Activated naive CD4-positive, alpha-beta T cell treated with anti-CD3 and anti-CD28 coated beads for 36 hours (primary cell): ENCODE measurements at regions of chr22 and their contacts with region 1.

Region 1: GRCh38 chr22:24555157-24556039 is at the start of gene SNRPD3:
- DNase-seq: peak; percentile 100
- H3K4me3 Mint-ChIP-seq: peak within 1 kb of the TSS; percentile 97
- H3K27ac Mint-ChIP-seq: peak within 1 kb of the TSS; percentile 100
- H3K4me1 Mint-ChIP-seq: peaks cover 48% of the 10 kb centered on the region
- H3K27me3 Mint-ChIP-seq: no peaks in the 10 kb centered on the region
- total RNA-seq, gene SNRPD3: 158 to 166 TPM

Region 2: GRCh38 chr22:23786752-23787599 is 768.4 kb before region 1 on chr22 and contains the start of gene SMARCB1:
- CTCF ChIA-PET with region 1: no interaction called
- intact Hi-C with region 1: loop called (anchors 2 kb)
- DNase-seq: peak; percentile 89
- H3K4me3 Mint-ChIP-seq: peak within 1 kb of the TSS; percentile 89
- H3K27ac Mint-ChIP-seq: peak within 1 kb of the TSS; percentile 95
- H3K4me1 Mint-ChIP-seq: peaks cover 34% of the 10 kb centered on the region
- H3K27me3 Mint-ChIP-seq: no peaks in the 10 kb centered on the region
- total RNA-seq, gene SMARCB1: 75.3 to 89.1 TPM

Region 3: DNA sequence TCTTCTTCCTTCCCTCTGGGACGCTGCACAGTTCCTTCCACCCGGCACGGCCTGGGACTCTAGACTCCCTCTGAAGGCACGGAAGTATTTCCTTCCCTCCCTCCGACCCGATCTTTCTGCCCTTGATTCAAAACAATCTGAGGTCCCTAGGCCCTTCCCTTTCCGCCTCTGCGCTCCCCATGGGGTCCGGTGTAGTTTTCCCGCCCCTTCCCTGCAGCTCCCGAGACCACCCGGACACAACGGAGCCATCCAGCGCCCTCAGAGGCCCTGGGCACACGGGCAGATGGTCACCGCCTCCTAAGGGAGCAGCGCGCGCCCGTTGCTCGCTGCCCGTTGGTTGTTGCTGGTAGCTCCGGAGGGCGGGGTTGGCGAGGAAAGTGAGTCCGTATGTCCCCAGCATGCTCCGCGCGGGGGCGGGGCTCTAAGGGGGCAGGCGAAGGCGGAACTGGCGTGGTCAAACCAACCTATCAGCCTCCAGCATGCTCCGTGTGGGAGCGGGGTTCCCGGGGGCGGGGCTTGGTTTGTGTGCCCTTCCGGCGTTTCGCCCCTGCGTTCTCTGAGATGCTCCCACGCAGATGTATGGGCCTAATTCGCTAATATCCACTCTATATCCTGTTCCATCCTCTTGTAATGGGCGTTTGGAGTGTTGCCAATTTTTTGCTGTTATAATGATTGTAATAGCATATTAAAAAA is 641.6 kb before region 1 on chr22:
- CTCF ChIA-PET with region 1: no interaction called
- intact Hi-C with region 1: loop called (anchors 1 kb)
- DNase-seq: peak; percentile 100
- H3K4me3 Mint-ChIP-seq: peak overlapping the region; percentile 99
- H3K27ac Mint-ChIP-seq: peak overlapping the region; percentile 99
- H3K4me1 Mint-ChIP-seq: peaks cover 24% of the 10 kb centered on the region
- H3K27me3 Mint-ChIP-seq: no peaks in the 10 kb centered on the region

Region 4: GRCh38 chr22:24270638-24271408 is 284.6 kb before region 1 on chr22 and contains the start of gene SPECC1L:
- CTCF ChIA-PET with region 1: no interaction called
- intact Hi-C with region 1: loop called (anchors 1 kb)
- DNase-seq: peak; percentile 91
- H3K4me3 Mint-ChIP-seq: peak within 1 kb of the TSS; percentile 89
- H3K27ac Mint-ChIP-seq: peak within 1 kb of the TSS; percentile 87
- H3K4me1 Mint-ChIP-seq: peaks cover 36% of the 10 kb centered on the region
- H3K27me3 Mint-ChIP-seq: no peaks in the 10 kb centered on the region
- total RNA-seq, gene SPECC1L: 33.5 to 35.7 TPM

Region 5: GRCh38 chr22:24601217-24602104 is 46.1 kb after region 1 on chr22:
- CTCF ChIA-PET with region 1: no interaction called
- intact Hi-C with region 1: loop called (anchors 5 kb)
- DNase-seq: no peak
- H3K4me3 Mint-ChIP-seq: no peak overlapping the region
- H3K27ac Mint-ChIP-seq: no peak overlapping the region
- H3K4me1 Mint-ChIP-seq: peaks cover 17% of the 10 kb centered on the region
- H3K27me3 Mint-ChIP-seq: no peaks in the 10 kb centered on the region

Region 6: DNA sequence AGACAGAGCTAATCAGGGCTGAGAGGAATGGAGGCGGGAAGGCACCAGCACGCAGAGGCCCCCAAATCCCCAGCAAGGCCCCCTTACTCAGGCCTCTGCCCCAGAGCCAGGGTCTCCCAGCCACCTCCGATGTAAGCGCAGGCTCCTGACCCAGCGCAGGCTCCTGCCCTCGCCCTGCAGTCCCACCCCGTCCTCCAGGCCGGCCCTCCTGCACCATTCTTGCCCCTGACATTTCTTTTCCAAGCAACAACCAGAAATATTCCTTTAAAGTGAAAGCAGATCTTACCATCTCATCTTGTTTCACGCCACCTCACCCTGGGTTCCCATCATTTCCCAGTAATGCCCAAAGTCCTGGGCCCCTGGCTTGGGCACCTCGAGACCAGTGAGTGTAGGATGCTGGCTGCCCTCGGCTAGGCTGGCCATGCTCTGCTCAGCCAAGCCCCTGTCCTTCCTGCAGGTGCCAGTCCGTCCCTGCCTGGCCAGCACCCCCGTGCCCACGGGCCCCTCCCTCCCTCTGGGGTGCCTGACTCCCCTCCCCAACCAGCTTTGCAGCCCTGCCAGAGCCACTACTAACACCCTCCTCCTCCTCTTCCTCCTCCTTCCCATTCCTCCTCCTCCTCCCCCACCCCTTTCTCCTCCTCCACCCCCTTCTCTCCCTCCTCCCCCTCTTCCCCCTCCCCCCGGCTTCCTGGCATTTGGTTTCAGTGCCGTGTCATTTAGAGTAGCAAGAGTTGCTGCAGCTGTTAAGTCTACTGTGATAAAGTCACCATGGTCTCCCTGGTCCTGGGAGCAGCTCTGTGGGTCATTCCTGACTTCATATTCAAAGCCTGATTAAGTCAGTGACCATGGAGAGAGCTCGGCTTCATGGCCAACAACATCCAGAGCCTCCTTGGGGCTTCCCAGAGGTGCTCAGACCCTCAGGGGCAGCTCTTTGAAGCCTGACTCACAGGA is 140.4 kb after region 1 on chr22:
- CTCF ChIA-PET with region 1: no interaction called
- intact Hi-C with region 1: no loop called
- DNase-seq: peak; percentile 12
- H3K4me3 Mint-ChIP-seq: no peak overlapping the region
- H3K27ac Mint-ChIP-seq: no peak overlapping the region
- H3K4me1 Mint-ChIP-seq: no peaks in the 10 kb centered on the region
- H3K27me3 Mint-ChIP-seq: no peaks in the 10 kb centered on the region

Region 7: DNA sequence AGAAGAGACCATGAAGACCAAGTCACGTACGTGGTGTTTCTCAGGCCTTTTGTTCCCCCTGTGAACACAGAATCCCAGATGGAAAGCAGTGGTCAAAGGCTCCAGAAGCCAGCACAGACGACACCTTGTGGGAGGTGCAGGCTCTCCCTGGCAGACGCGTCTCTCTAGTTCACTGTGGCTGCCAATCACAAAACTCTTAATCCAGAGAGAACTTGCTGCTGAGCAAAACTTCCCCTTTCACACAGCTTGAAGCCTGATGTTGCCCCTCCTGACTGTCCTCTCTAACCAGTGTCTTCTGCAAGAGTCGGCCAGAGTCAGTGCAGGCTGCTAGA is 152.0 kb after region 1 on chr22:
- CTCF ChIA-PET with region 1: no interaction called
- intact Hi-C with region 1: no loop called
- DNase-seq: no peak
- H3K4me3 Mint-ChIP-seq: no peak overlapping the region
- H3K27ac Mint-ChIP-seq: no peak overlapping the region
- H3K4me1 Mint-ChIP-seq: no peaks in the 10 kb centered on the region
- H3K27me3 Mint-ChIP-seq: peaks cover 7% of the 10 kb centered on the region